ENCODE measurements at regions of chr16 and their contacts with region 1.

Region 1: DNA sequence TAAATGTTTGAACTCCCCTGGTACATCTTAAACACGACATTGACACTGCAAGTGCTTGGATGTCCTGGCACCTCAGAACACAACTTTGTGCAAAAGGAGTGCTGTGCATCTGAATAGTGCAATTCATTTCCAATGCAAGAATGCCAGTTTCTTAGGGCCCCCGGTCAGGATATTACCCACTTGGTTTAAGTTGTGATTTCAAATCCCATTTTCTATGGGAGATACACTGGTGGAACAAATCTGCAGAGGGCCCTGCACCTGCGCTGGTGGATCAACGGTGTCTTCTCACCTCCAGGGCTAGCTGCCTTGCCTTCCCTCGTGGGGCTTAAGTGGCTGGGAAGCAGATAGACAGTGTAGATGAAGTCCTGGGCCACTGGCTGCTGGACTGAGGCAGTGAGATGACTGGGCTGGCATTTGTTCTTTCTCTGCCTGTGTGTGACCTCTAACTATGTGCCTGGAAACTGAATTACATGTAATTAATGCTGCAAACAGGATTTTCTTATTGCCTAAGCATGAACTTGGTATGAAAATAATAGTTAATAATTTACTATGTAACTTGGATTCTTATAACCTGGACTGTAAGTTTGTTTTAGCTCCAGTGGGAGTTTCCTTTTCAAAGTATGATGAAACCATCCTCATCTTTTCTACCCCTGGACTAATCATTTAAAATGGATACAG is 20.9 kb downstream of the HAPSTR1 start:
- DNase-seq: no peak
- ATAC-seq: no peak
- H3K4me3 ChIP-seq: no peak overlapping the region
- H3K27ac ChIP-seq: peak overlapping the region in 2 of 4 donors; percentile 15 to 31
- H3K4me1 ChIP-seq: peaks cover 84 to 90% of the 10 kb centered on the region in 2 donors
- H3K27me3 ChIP-seq: no peaks in the 10 kb centered on the region
- CTCF ChIP-seq: no peak
- POLR2A ChIP-seq: no peak

Region 2: DNA sequence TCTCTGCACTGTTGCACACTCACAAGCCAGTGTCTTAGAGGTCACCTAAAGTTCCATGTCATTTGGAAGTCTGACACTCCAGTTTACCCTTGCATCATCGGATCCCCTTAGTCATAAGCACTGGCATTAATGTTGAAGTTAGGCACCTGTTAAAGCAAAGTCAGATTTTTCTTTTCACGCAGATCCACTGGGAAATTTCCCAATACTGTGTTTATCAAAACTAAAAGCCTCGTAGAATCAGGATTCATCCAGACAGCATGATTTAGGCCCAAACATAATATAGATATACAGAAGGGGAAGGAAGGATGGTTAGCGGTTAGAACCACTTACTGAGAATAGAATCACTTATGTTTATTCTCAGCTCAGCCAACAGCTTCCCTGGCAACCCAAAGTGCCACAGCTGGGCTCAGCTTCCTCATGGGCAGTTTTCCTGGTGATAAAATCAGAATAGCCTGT is 50.9 kb before region 1 on chr16:
- in situ Hi-C with region 1: no loop called
- intact Hi-C with region 1: loop called (anchors 5 kb)
- DNase-seq: peak; percentile 62 to 81
- ATAC-seq: peak; percentile 99
- H3K4me3 ChIP-seq: no peak overlapping the region
- H3K27ac ChIP-seq: peak overlapping the region; percentile 68 to 82 (median 78)
- H3K4me1 ChIP-seq: peaks cover 16 to 23% of the 10 kb centered on the region in 2 donors
- H3K27me3 ChIP-seq: no peaks in the 10 kb centered on the region
- CTCF ChIP-seq: no peak
- POLR2A ChIP-seq: no peak

Region 3: GRCh38 chr16:9159839-9160550 is 47.7 kb after region 1 on chr16:
- in situ Hi-C with region 1: no loop called
- intact Hi-C with region 1: no loop called
- DNase-seq: no peak
- ATAC-seq: no peak
- H3K4me3 ChIP-seq: no peak overlapping the region
- H3K27ac ChIP-seq: no peak overlapping the region
- H3K4me1 ChIP-seq: no peaks in the 10 kb centered on the region
- H3K27me3 ChIP-seq: peaks cover 0 to 4% (median 0%) of the 10 kb centered on the region in 3 donors
- CTCF ChIP-seq: peak in 3 of 5 experiments; percentile 35 to 52 (median 38)
- POLR2A ChIP-seq: no peak